Posterior cingulate gyrus (tissue), 11 donors: ENCODE measurements at regions of chr2 and their contacts with region 1.

Region 1: DNA sequence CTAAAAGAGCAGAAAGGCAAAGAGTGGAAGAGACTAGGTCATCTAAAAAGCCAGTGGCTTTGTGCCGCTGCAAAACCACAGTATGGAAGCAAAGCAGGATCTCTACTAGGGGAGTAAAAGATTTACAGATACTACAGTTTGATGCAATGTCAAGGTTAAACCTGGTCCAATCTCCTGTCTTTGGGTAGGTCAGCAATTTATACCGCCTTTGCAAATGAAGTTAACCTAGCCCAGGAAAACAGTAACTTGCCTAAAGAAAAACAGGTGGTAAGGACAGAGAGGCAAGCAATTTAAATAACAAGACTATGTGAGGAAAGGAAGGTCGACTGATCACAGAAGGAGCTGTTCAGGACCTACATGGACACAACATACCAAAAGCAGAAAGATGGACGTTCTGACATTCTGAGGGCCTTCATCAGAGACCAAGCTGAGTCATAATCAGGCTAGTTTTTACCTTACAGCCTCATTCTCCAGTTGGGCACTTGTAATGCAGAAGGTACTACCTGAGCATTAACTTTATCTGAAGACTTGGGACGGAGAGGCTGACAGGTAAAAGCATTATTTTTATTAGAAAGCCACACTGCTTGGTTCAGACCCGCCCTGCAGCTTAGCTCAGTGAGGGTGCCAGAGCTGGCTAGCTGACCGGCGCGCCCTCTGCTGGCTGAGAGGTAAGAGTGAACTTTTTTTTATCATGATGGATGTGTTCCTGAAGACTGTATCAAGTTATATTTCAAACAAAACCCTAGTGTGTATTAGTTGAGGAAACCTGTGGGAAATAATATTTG is 15.9 kb downstream of the CDKL4 start:
- DNase-seq: peak; percentile 69 to 97 (median 83)

Region 2: DNA sequence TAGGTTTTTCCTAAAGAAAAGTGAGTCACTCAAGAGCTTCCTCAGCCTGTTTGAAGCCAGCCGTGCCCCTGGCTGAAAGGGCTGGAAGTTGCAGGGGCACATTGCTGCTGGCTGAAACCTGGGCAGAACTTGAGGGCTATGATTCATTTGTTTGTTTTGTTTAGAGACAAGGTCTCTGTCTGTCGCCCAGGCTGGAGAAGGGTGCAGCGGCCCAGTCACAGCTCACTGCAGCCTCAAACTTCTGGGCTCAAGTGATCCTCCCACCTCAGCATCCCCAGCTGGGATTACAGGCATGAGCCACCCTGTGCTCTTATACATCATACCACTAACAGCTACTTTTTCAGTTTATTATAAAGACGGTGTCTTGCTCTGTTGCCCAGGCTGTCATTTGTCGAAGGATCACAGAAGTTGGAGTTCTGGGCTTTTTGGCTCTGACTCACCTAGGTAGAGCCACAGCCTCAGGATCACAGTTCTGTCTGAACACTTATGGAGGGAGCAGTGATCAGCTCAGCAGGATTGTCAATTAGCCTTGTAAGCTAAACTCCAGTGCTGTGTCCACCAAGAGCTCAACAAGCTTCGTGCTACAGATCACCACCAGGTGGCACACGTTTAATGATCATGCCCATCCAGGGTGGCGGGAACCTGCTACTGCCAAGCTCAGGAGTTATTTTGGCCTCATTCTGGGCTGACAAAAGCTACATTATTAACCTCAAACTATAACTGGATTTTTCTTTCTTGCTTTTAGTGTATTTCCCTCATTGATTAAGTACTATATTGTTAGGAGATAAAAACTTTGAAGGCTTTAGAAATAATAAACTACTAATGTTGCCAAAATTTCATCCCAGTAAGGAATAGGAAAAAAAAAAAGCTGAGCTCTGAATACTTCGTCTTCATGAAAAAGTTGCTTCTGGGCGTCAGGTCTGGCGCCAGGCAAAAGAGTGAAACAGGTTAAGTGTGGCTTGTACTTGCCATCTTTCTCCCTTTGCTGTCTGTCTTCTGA is 280.3 kb before region 1 on chr2:
- intact Hi-C with region 1: loop called (anchors 10 kb)
- DNase-seq: peak; percentile 37 to 95 (median 74)

Region 3: GRCh38 chr2:39059366-39059952 is 168.4 kb before region 1 on chr2:
- intact Hi-C with region 1: loop called (anchors 1 kb)
- DNase-seq: no peak

Region 4: DNA sequence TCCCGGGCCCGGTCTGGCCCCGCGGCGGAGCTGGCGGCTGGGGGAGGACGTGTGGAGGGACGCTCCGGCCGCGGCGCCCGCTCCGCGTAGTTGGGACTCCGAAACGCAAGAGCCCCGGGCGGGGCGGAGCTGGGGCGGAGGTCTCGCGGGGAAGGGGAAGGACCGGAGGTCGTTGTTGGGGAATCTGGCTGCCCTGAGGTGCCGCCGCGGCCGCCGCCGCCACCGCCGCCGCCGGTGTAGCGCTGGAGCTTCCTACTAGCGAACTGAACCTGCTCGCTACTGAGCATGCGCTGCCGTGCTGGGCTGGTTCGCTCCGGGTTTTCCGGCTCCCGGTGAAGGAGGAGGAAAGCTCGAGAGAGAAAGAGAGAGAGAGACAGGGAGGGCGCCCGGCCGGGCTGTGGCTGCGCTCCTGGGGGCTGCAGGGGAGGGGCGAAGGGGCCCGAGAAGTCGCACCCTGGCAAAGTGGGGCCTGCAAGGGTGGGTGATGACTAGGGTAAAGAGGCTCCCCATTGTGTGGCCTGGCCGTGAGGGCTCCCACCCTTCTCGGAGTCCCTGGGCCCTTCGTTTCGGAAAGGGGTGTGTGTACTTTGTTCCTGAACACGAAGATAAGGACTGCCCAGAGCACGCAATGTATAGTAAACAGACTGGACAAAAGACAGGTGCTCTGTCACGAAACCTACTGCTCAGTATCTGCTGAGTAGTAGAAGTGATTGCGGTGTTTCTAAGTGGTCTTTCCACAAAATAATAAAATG is 106.9 kb before region 1 on chr2 and contains the start of gene SOS1:
- intact Hi-C with region 1: loop called (anchors 2 kb)
- DNase-seq: peak; percentile 92 to 99 (median 94)

Region 5: DNA sequence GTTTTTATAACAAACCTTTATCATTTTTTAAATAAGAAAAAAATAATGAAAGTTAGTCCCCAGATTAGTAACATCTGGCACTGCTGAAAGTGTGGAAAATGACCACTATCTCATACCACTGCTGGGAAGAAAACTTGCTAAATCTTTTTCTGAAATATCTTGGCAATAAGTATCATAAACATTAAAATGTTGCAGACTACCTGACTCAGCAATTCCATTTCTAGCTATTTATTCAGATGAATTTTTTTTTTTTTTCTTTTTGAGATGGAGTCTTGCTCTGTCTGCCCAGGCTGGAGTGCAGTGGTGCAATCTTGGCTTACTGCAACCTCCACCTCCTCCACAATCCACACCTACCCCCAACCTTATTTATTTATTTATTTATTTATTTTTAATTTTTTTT is 71.7 kb before region 1 on chr2:
- intact Hi-C with region 1: no loop called
- DNase-seq: no peak

Region 6: DNA sequence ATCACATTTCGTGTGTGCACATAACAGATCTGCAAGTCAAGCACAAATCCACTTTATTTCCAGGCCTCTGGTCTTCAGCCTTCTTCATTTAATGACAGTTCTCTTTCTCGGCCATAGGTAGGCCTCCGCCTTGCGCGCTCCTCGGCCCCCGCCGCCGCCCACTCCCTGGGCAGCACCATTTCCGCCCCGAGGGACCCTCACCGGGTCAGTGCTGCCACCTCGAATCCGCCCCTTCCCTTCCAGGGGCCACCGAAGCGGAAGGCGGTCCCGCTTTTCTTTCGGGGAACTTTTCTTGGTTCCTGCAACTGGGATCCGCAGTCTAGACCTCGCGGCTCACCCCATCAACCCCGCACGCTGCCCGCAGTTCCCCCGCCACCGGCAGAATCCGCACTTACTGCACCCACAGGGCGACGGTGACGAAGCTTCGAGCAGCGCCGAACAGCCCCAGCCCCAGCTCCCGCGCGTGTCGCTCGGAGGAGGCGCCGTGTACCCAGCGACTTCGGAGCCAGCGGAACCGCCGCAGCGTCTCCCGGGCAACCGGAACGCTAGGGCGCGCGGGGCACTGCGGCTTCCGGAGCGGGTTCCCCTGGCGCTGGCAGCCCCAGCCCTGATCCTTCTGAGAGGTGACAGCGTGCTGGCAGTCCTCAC is 15.8 kb after region 1 on chr2 and contains the start of gene CDKL4:
- intact Hi-C with region 1: no loop called
- DNase-seq: peak in 5 of 10 donors; percentile 13 to 90 (median 76)